Activated naive CD4-positive, alpha-beta T cell treated with anti-CD3 and anti-CD28 coated beads for 36 hours (primary cell): ENCODE measurements at regions of chr10 and their contacts with region 1.

Region 1: GRCh38 chr10:97520978-97521761 is 22.4 kb downstream of the UBTD1 start:
- DNase-seq: no peak
- H3K4me3 Mint-ChIP-seq: no peak overlapping the region
- H3K27ac Mint-ChIP-seq: no peak overlapping the region
- H3K4me1 Mint-ChIP-seq: no peaks in the 10 kb centered on the region
- H3K27me3 Mint-ChIP-seq: no peaks in the 10 kb centered on the region

Region 2: GRCh38 chr10:97081621-97082235 is 439.4 kb before region 1 on chr10:
- CTCF ChIA-PET with region 1: no interaction called
- intact Hi-C with region 1: no loop called
- DNase-seq: peak; percentile 78
- H3K4me3 Mint-ChIP-seq: no peak overlapping the region
- H3K27ac Mint-ChIP-seq: no peak overlapping the region
- H3K4me1 Mint-ChIP-seq: no peaks in the 10 kb centered on the region
- H3K27me3 Mint-ChIP-seq: peaks cover 25% of the 10 kb centered on the region

Region 3: GRCh38 chr10:97534746-97535367 is 13.7 kb after region 1 on chr10:
- CTCF ChIA-PET with region 1: interaction called, 14 read pairs
- intact Hi-C with region 1: no loop called
- DNase-seq: peak; percentile 59
- H3K4me3 Mint-ChIP-seq: no peak overlapping the region
- H3K27ac Mint-ChIP-seq: no peak overlapping the region
- H3K4me1 Mint-ChIP-seq: no peaks in the 10 kb centered on the region
- H3K27me3 Mint-ChIP-seq: no peaks in the 10 kb centered on the region